ENCODE measurements at regions of chr19 and their contacts with region 1.

Region 1: DNA sequence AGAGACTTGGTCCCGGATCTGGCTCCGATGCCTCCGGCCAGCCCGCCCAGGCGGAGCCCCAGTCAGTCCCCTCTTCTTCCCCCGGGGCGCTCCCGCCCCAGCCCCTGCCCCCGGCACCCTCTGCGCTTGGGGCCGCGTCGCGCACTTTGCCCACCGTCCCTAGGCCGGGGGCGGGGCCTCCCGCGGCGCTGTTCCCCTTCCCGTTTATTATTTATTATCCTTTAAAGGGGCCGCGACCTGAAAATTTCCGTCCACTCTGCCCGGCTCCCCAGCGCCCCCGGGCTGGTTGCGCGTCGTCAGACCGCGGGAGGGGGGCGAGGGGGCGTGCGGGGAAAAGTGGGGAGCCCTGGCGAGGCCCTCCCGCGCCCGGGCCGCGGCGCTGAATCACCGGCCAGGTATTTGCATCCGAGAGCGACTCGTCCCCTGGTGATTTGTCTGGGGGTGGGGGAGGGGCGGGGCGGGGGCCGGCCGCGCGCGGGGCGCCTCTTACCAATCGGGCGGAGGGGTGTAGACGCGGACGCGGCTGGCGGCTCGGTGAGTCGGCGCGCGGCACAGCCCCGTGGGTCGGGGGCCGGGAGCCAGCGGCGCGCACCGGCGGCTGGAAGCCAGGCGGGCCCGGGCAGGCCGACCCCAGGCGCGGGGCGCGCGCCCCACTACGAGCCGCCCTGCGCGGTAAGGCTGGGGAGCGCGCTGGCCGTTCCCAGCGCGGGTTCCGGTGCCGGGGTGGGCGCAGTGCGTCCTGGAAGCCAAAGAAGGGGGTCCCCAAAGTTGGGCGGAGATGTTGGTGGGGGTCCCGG is at the start of gene ARID3A:
- DNase-seq: peak; percentile 77 to 91 (median 83)
- ATAC-seq: peak; percentile 25 to 83 (median 80)
- H3K4me3 ChIP-seq: peak within 1 kb of the TSS; percentile 54 to 96 (median 86)
- H3K27ac ChIP-seq: peak within 1 kb of the TSS in 11 of 12 donors; percentile 53 to 93 (median 82)
- H3K4me1 ChIP-seq: peaks cover 0 to 39% (median 18%) of the 10 kb centered on the region in 12 donors
- H3K27me3 ChIP-seq: peaks cover 5 to 8% (median 8%) of the 10 kb centered on the region in 9 donors
- CTCF ChIP-seq: peak in 1 of 12 donors; percentile 13
- POLR2A ChIP-seq: no peak
- total RNA-seq, gene ARID3A: 1.9 to 15.7 (median 5.8) TPM

Region 2: DNA sequence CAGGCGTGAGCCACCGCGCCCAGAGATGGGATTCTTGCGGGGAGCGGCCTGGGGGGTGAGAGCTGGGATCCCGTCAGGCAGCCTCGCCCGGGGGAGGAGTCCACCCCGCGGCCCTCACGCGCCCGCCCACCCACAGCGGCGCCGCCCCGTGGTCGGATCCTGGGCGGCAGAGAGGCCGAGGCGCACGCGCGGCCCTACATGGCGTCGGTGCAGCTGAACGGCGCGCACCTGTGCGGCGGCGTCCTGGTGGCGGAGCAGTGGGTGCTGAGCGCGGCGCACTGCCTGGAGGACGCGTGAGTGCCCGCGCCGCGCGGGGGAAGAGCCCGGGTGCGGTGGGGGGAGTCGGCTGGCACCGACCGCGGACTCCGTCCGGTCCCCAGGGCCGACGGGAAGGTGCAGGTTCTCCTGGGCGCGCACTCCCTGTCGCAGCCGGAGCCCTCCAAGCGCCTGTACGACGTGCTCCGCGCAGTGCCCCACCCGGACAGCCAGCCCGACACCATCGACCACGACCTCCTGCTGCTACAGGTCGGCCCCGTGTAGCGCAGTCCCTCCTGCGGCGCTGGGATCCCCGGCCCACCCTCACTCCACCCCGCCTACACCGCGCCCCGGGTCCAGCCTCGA is 65.1 kb before region 1 on chr19:
- intact Hi-C with region 1: loop called in 6 of 10 experiments (anchors 2 to 5 kb)
- DNase-seq: peak in 4 of 5 donors; percentile 77 to 82 (median 79)
- ATAC-seq: peak in 3 of 4 donors; percentile 52 to 67 (median 65)
- H3K4me3 ChIP-seq: peak overlapping the region; percentile 13 to 59 (median 44)
- H3K27ac ChIP-seq: peak overlapping the region in 7 of 12 donors; percentile 31 to 80 (median 75)
- H3K4me1 ChIP-seq: peaks cover 0 to 42% (median 4%) of the 10 kb centered on the region in 12 donors
- H3K27me3 ChIP-seq: peaks cover 0 to 48% (median 17%) of the 10 kb centered on the region in 9 donors
- CTCF ChIP-seq: peak in 6 of 12 donors; percentile 13 to 39 (median 22)
- POLR2A ChIP-seq: no peak

Region 3: DNA sequence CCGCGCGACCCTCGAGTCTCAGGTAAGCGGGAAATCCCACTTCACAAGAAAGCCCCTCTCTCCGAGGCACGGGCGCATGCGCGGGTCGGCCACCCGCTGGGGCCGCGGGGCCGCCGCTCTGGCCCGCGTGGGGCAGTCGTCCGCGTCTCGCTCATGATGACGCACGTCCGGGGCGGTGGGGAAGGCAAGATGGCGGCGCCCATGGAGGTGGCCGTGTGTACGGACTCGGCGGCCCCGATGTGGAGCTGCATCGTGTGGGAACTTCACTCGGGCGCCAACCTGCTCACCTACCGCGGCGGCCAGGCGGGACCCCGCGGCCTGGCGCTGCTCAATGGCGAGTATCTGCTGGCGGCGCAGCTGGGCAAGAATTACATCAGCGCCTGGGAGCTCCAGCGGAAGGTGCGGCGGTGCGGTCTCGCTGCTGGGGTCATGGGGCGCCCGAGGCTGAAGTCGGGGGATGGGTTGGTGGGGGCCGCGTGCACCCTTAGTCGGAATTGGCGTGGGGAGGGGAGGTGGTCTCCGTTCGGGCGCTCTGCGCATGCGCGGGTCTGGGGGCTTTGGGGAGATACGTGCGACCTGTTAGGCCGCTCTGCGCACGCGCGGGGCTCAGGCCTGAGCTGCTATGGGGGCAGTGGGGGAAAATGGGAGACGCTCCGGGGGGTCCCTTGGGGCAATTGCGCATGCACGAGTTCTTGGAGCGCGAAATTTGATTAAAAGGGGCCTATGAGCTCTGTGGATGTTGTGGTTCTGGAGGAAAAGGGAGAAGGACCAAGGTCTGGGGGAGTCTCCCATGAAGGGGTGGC is 58.6 kb after region 1 on chr19 and contains the start of gene WDR18:
- intact Hi-C with region 1: loop called (anchors 1 to 2 kb)
- DNase-seq: peak; percentile 94 to 97 (median 94)
- ATAC-seq: peak; percentile 87 to 97 (median 96)
- H3K4me3 ChIP-seq: peak within 1 kb of the TSS; percentile 80 to 100 (median 91)
- H3K27ac ChIP-seq: peak within 1 kb of the TSS; percentile 67 to 92 (median 86)
- H3K4me1 ChIP-seq: peaks cover 3 to 38% (median 19%) of the 10 kb centered on the region in 12 donors
- H3K27me3 ChIP-seq: no peaks in the 10 kb centered on the region
- CTCF ChIP-seq: peak in 8 of 12 donors; percentile 11 to 50 (median 34)
- POLR2A ChIP-seq: peak in 1 of 2 donors; percentile 57
- total RNA-seq, gene WDR18: 15.6 to 36.3 (median 19.2) TPM

Region 4: GRCh38 chr19:1001538-1002166 is 75.9 kb after region 1 on chr19:
- intact Hi-C with region 1: loop called in 2 of 10 experiments (anchors 1 kb)
- DNase-seq: peak in 4 of 5 donors; percentile 49 to 86 (median 62)
- ATAC-seq: peak in 3 of 4 donors; percentile 59 to 70 (median 63)
- H3K4me3 ChIP-seq: peak overlapping the region in 3 of 12 donors; percentile 3 to 15 (median 12)
- H3K27ac ChIP-seq: no peak overlapping the region
- H3K4me1 ChIP-seq: peaks cover 0 to 21% (median 5%) of the 10 kb centered on the region in 12 donors
- H3K27me3 ChIP-seq: peaks cover 32 to 65% (median 46%) of the 10 kb centered on the region in 9 donors
- CTCF ChIP-seq: peak; percentile 76 to 94 (median 89)
- POLR2A ChIP-seq: no peak

Region 5: GRCh38 chr19:1016647-1017114 is 91.0 kb after region 1 on chr19:
- intact Hi-C with region 1: no loop called
- DNase-seq: no peak
- ATAC-seq: peak in 1 of 4 donors; percentile 0
- H3K4me3 ChIP-seq: no peak overlapping the region
- H3K27ac ChIP-seq: peak overlapping the region in 10 of 12 donors; percentile 3 to 74 (median 38)
- H3K4me1 ChIP-seq: peaks cover 30 to 66% (median 54%) of the 10 kb centered on the region in 12 donors
- H3K27me3 ChIP-seq: no peaks in the 10 kb centered on the region
- CTCF ChIP-seq: no peak
- POLR2A ChIP-seq: no peak

Region 6: GRCh38 chr19:1183534-1184172 is 257.9 kb after region 1 on chr19:
- intact Hi-C with region 1: loop called in 1 of 10 experiments (anchors 10 kb)
- DNase-seq: no peak
- ATAC-seq: no peak
- H3K4me3 ChIP-seq: no peak overlapping the region
- H3K27ac ChIP-seq: no peak overlapping the region
- H3K4me1 ChIP-seq: peaks cover 0 to 30% (median 2%) of the 10 kb centered on the region in 12 donors
- H3K27me3 ChIP-seq: no peaks in the 10 kb centered on the region
- CTCF ChIP-seq: no peak
- POLR2A ChIP-seq: no peak

Region 7: DNA sequence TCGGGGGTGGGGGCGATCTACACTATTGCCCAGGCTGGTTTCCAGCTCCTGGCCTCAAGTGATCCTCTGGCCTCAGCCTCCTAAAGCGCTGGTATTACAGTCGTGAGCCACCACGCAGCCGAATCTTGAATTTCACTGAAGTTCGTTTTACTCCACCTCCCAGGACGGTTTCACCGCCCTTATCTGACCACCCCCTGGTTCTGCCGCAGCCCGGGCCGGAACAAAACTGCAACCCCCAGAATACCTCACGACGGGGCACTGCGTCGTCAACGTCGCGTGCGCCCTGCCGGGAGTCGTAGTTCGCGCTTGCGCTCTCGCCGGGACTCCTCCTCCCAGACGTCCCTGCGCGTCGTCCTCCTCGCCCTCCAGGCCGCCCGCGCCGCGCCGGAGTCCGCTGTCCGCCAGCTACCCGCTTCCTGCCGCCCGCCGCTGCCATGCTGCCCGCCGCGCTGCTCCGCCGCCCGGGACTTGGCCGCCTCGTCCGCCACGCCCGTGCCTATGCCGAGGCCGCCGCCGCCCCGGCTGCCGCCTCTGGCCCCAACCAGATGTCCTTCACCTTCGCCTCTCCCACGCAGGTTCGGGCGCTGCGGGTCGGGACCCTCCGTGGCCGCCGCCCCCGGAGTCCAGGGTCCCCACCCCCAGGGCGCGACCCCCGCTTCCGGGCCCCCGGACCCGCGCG is 315.8 kb after region 1 on chr19 and contains the start of gene ATP5F1D:
- intact Hi-C with region 1: loop called in 2 of 10 experiments (anchors 2 to 10 kb)
- DNase-seq: peak; percentile 95 to 98 (median 97)
- ATAC-seq: peak; percentile 27 to 65 (median 58)
- H3K4me3 ChIP-seq: peak within 1 kb of the TSS; percentile 62 to 99 (median 92)
- H3K27ac ChIP-seq: peak within 1 kb of the TSS; percentile 95 to 100 (median 100)
- H3K4me1 ChIP-seq: peaks cover 10 to 86% (median 70%) of the 10 kb centered on the region in 12 donors
- H3K27me3 ChIP-seq: peaks cover 0 to 10% (median 0%) of the 10 kb centered on the region in 9 donors
- CTCF ChIP-seq: no peak
- POLR2A ChIP-seq: peak in 1 of 2 donors; percentile 93
- total RNA-seq, gene ATP5F1D: 201 to 584 (median 450) TPM

Region 8: GRCh38 chr19:1249298-1249989 is 323.7 kb after region 1 on chr19:
- intact Hi-C with region 1: loop called in 1 of 10 experiments (anchors 10 kb)
- DNase-seq: peak; percentile 92 to 96 (median 94)
- ATAC-seq: peak in 2 of 4 donors; percentile 5 to 6
- H3K4me3 ChIP-seq: peak overlapping the region; percentile 68 to 97 (median 85)
- H3K27ac ChIP-seq: peak overlapping the region; percentile 96 to 100 (median 100)
- H3K4me1 ChIP-seq: peaks cover 21 to 75% (median 57%) of the 10 kb centered on the region in 12 donors
- H3K27me3 ChIP-seq: no peaks in the 10 kb centered on the region
- CTCF ChIP-seq: no peak
- POLR2A ChIP-seq: peak; percentile 85 to 95